ENCODE measurements at regions of chr4 and their contacts with region 1.

Region 1: DNA sequence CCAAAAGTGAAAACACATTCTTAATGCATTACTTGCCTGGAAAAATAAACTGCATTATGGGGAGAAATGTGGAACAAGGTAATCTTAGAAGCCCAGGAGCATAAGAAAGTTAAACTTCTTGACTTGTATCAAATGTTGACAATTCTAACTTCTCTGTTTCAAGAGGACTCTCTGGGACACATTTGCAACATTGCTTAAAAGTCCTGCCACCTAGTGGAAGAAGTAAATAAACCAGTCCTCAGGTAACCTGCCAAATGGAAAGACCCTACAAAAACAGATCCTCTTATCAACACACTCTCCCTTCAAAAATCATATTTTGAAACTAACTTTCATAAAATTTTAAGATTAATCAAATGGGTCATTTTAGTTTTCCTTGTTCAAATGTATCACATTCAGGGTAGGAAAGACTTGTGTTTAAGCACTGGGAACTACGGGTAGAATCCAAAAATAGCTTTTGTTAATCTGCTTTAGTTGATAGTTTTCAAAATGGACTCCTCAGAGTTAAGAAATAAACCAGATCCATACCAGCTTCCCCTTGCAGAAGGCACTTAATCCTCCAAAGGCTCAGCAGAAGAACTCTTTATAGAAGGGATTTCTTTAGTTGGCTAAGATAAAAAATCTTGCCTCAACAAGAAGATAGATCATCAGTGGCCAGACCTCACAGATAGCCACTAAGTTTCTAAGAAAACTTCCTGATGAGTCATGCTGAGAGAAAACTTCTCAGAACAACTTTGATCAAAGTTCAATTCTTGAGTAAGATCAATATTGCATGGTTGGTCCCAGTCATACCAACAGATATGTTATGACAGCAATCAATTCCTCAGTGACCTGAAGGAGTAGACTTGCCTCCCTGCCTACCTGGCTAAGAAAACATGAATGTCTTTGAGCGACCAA is 141.7 kb downstream of the HHIP start:
- DNase-seq: peak; percentile 22 to 26 (median 24)
- ATAC-seq: peak; percentile 70; the same call in 2 of the 3 replicates
- H3K4me3 ChIP-seq: no peak overlapping the region
- H3K27ac ChIP-seq: no peak overlapping the region
- H3K4me1 ChIP-seq: no peaks in the 10 kb centered on the region
- H3K27me3 ChIP-seq: no peaks in the 10 kb centered on the region
- CTCF ChIP-seq: peak; percentile 32 to 54 (median 51); a peak in 5 of 6 replicates
- EP300 ChIP-seq: no peak
- POLR2A ChIP-seq: no peak
- RAD21 ChIP-seq: peak; percentile 10 to 46; a peak in 2 of 4 replicates

Region 2: DNA sequence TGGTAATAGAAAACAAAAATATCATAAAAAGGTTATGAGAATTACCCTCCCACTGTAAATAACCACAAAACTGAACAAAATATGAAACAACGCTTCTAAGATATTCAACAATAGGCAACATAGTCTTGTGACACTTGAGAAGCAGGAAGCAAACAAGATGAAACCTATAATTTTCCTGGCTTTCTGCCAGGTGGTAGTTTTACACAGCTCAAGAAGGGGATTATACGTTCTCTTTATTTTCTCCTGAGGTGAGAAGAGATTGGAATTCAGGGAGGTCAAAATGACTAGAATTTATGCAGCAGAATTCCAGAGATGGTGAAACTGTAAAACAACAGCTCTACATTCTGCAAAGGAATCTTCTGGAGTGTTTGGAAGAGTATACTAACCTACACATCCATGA is 44.4 kb after region 1 on chr4:
- CTCF ChIA-PET with region 1: no interaction called
- POLR2A ChIA-PET with region 1: no interaction called
- in situ Hi-C with region 1: no loop called
- intact Hi-C with region 1: no loop called
- DNase-seq: peak in 1 of 4 experiments; percentile 1
- ATAC-seq: no peak
- H3K4me3 ChIP-seq: no peak overlapping the region
- H3K27ac ChIP-seq: no peak overlapping the region
- H3K4me1 ChIP-seq: no peaks in the 10 kb centered on the region
- H3K27me3 ChIP-seq: no peaks in the 10 kb centered on the region
- CTCF ChIP-seq: no peak
- EP300 ChIP-seq: no peak
- POLR2A ChIP-seq: no peak
- RAD21 ChIP-seq: no peak

Region 3: DNA sequence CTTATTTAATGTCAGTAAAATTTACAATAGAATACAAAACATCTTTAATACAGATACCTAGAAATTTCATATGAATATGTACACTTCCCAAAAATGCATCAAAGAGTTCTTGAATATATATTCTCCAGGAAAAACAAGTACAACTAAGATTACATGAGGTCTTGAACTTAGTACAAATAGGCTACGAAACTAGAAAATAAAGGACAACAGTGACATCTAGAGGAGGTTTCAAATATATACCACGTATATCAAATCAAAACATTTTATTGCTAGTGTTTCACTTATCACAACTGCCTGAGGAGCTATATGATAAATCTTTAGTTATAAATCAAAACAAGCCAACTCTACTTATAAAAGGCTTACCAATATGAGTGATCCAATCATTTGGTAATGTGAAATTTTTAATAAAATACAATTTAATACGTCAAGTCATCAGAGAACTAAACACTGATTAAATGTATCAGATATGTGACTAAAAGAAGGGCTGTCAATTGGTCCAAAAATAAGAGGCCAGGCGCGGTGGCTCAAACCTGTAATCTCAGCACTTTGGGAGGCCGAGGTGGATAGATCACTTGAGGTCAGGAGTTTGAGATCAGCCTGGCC is 273.8 kb after region 1 on chr4:
- CTCF ChIA-PET with region 1: no interaction called
- POLR2A ChIA-PET with region 1: no interaction called
- in situ Hi-C with region 1: no loop called
- intact Hi-C with region 1: loop called (anchors 5 kb)
- DNase-seq: peak in 3 of 4 experiments; percentile 10 to 51 (median 11)
- ATAC-seq: peak; percentile 85
- H3K4me3 ChIP-seq: no peak overlapping the region
- H3K27ac ChIP-seq: no peak overlapping the region
- H3K4me1 ChIP-seq: no peaks in the 10 kb centered on the region
- H3K27me3 ChIP-seq: no peaks in the 10 kb centered on the region
- CTCF ChIP-seq: peak in 2 of 3 experiments; percentile 9 to 63; a peak in 4 of 6 replicates
- EP300 ChIP-seq: no peak
- POLR2A ChIP-seq: no peak
- RAD21 ChIP-seq: peak; percentile 52 to 62